Activated B cell treated with CpG ODN at 0.5 μM for 24 hours (primary cell): ENCODE measurements at regions of chr1 and their contacts with region 1.

Region 1: DNA sequence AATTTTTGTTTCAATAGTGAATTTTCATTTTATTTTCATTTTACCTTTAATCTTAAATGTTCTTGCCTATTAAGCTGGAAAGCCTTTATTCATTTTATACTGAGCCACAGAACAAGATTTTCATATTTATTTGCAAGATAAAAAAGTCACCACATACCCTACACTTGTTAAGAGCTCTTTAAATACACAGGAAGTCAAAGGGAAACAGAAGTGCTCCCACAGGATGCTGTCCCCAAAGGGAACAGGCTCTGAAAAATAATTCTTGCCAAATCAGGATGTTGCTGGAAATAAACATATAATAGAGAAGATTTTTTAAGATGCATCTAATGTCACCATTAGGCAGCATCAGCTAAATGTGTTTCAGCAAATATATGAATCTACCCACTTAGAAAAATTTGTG is 113.6 kb downstream of the VAV3 start:
- DNase-seq: no peak
- ATAC-seq: no peak
- H3K4me3 Mint-ChIP-seq: no peak overlapping the region
- H3K27ac Mint-ChIP-seq: no peak overlapping the region
- H3K4me1 Mint-ChIP-seq: peaks cover 72% of the 10 kb centered on the region
- H3K27me3 Mint-ChIP-seq: no peaks in the 10 kb centered on the region
- CTCF ChIP-seq: no peak

Region 2: GRCh38 chr1:107870696-107871095 is 19.3 kb after region 1 on chr1:
- CTCF ChIA-PET with region 1: no interaction called
- POLR2A ChIA-PET with region 1: interaction called, 3 read pairs
- intact Hi-C with region 1: loop called (anchors 2 kb)
- DNase-seq: no peak
- ATAC-seq: no peak
- H3K4me3 Mint-ChIP-seq: peak overlapping the region; percentile 2
- H3K27ac Mint-ChIP-seq: peak overlapping the region; percentile 90
- H3K4me1 Mint-ChIP-seq: peaks cover 93% of the 10 kb centered on the region
- H3K27me3 Mint-ChIP-seq: no peaks in the 10 kb centered on the region
- CTCF ChIP-seq: no peak